Left ventricle myocardium superior (tissue), 1 donor: ENCODE measurements at regions of chr1 and their contacts with region 1.

Region 1: DNA sequence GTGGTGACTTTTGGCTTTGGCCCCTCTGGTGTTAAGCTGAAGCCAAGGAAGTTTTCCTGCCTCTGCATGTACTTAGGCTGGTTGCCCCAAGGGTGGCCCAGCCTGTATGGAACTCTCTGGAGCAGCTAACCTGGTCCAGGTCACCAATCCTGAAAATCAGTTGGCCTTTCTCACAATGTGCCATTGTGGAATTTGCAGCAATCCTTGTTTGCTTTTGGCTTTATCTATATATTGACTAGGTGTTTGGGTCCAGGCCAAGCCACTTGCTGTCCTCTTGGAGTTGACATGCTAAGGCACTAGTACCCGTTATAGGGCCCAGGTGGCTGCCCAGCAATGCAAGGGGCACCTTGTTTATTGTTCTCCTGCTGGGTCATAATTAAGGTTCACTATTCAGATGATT is 124.6 kb downstream of the CAMTA1 start:
- DNase-seq: no peak
- ATAC-seq: no peak

Region 2: DNA sequence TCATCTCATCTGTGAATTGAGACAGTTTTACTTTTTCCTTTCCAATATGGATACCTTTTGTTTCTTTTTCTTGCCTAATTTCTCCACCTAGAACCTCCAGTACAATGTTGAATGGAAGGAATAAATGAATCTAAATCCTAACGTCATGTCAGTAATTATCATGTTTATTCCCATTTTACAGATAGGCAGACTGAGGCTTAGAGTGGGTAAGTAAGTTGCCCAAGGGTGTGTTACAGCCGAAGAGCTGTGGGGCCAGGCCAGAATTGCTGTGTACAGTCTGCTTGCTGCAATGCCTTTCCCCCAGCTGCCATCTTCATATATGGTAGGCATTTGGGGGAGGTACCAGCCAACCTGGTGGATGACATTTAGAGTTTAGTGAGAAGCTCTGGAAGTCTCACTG is 38.1 kb after region 1 on chr1:
- intact Hi-C with region 1: loop called (anchors 2 kb)
- DNase-seq: no peak
- ATAC-seq: no peak

Region 3: DNA sequence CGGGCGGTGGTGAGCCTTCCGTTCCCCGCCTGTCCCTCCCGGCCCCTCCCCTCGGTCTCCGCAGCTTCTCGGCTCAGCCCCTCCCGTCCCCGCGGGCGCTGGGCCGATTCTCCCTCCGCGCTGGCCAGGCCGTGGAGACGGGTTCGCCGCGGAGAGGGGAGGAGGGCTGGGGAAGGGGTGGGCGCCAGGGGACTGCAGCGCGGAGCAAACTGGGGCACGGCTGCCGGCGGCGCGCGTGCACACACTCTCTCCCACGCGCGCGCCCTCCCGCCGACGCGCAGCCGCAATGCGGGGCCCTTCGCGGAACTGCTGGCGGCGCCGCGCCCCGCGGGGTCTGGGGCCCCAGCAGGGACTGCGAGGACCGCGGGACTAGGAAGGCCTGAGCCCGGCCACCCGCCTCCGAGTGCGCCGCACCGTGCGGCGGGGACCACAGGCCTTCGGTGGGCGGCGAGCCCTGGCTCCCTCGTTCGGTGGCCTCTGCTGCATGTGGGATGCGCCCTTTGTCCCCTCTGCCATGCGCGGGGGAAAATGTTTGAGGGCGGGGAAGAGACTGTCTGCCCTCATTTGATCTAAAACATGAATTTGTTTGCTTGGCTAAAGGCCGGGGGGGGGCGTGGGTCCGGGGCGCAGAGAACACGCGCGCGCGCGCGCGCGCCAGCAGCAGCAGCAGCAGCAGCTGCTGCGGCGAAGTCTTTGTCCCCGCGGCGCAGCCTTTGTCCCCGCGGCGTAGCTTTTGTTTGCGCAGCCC is 770.5 kb after region 1 on chr1:
- intact Hi-C with region 1: no loop called
- DNase-seq: peak; percentile 79
- ATAC-seq: peak; percentile 92